ENCODE measurements at regions of chr2 and their contacts with region 1.

Region 1: GRCh38 chr2:46364797-46365457 is 67.7 kb downstream of the EPAS1 start:
- DNase-seq: peak; percentile 58
- H3K4me3 Mint-ChIP-seq: no peak overlapping the region
- H3K27ac Mint-ChIP-seq: no peak overlapping the region
- H3K4me1 Mint-ChIP-seq: peaks cover 55% of the 10 kb centered on the region
- H3K27me3 Mint-ChIP-seq: peaks cover 20% of the 10 kb centered on the region

Region 2: GRCh38 chr2:46010925-46011490 is 353.9 kb before region 1 on chr2:
- CTCF ChIA-PET with region 1: interaction called, 19 read pairs
- DNase-seq: no peak
- H3K4me3 Mint-ChIP-seq: no peak overlapping the region
- H3K27ac Mint-ChIP-seq: no peak overlapping the region
- H3K4me1 Mint-ChIP-seq: peaks cover 6% of the 10 kb centered on the region
- H3K27me3 Mint-ChIP-seq: no peaks in the 10 kb centered on the region

Region 3: DNA sequence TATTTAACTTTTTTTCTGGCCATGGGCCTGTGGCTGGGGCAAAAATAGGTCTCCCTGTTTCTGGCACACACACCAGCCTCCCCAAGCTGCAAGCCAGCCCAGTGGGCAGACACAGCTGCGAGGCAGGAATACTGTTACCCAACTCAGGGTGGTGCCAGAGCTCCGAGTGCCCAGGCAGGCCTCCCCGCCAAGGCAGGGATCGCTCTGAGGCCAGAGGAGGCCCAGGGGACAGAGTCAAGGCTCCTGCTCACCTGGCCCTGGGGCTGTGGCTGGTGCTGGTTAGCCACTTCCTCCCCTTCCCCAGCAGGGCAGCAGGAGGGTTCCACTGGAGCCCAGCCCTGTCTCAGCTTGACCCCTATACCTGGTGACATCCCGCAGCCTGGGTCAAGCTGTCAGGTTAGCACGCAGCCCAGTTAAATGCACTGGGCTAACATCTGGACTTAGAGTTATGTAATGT is 134.8 kb before region 1 on chr2:
- CTCF ChIA-PET with region 1: interaction called, 10 read pairs
- DNase-seq: peak; percentile 33
- H3K4me3 Mint-ChIP-seq: no peak overlapping the region
- H3K27ac Mint-ChIP-seq: no peak overlapping the region
- H3K4me1 Mint-ChIP-seq: peaks cover 22% of the 10 kb centered on the region
- H3K27me3 Mint-ChIP-seq: peaks cover 15% of the 10 kb centered on the region

Region 4: DNA sequence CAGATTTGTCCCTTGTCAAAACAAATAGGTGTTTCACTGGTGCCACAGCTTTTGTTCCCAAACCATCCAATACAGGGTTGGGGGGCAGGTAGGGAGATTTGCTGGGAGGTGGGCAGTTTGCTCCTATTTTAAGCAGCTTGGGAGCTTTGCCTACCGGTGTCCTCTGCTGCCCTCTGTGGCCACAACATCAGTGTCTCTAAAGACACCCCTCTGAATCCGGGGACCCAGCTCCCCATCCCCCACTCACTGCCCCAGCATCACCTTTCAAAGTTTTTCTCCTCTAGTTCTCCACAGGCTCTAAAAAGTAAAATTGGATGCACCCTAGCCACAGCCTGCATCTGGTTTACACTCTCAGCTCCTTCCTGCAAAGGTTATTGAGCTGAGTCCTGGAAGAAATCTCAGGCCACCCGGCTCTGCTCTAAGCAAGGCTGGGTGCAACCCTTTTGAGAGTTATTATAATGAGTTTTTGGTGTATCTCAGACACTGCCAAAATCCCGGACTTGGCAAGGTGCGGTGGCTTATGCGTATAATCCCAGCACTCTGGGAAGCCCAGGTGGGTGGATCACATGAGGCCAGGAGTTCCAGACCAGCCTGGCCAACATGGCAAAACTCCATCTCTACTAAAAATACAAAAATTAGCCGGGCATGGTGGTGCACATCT is 70.6 kb before region 1 on chr2:
- CTCF ChIA-PET with region 1: interaction called, 12 read pairs
- DNase-seq: peak; percentile 57
- H3K4me3 Mint-ChIP-seq: no peak overlapping the region
- H3K27ac Mint-ChIP-seq: no peak overlapping the region
- H3K4me1 Mint-ChIP-seq: peaks cover 23% of the 10 kb centered on the region
- H3K27me3 Mint-ChIP-seq: peaks cover 81% of the 10 kb centered on the region

Region 5: DNA sequence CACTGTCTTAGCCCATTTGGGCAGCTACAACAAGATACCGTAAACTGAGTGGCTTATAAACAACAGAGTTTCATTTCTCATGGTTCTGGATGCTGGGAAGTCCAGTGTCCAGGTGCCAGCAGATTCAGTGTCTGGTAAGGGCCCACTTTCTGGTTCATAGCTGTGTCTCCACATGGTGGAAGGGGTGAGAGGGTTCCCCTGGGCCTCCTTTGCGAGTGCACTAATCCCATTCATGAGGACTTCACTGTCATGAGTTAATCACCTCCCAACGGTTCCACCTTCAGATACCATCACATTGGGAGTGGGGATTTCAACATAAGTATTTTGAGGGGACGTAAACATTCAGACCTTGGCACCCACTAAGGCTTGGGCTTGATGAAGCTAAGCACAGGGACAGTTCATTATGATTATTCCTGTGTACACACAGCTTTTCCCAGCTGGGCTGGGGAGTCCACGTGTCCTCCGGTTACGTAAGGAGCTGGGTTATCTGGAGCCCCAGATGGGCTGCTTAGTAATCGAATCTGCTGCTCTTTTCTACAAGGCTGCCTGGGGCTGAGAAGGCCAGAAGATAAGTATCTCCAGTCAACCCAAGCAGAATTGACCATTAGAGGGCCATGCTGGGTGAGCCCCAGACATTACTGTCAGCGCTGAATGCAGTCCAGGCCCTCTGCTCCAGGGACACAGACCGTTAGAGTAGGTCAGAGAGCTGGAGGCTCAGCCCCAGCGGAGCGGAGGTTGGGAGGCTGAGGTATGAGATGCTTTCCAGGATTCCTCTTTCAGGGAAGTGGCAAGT is 25.1 kb before region 1 on chr2:
- CTCF ChIA-PET with region 1: interaction called, 11 read pairs
- DNase-seq: no peak
- H3K4me3 Mint-ChIP-seq: no peak overlapping the region
- H3K27ac Mint-ChIP-seq: no peak overlapping the region
- H3K4me1 Mint-ChIP-seq: peaks cover 23% of the 10 kb centered on the region
- H3K27me3 Mint-ChIP-seq: peaks cover 73% of the 10 kb centered on the region

Measured in activated naive CD4-positive, alpha-beta T cell treated with anti-CD3 and anti-CD28 coated beads, Interleukin-2, amount 10 ng/mL, durations not matched to agents 7 days and 5 days (primary cell).